Activated naive CD4-positive, alpha-beta T cell treated with anti-CD3 and anti-CD28 coated beads for 36 hours (primary cell): ENCODE measurements at regions of chr19 and their contacts with region 1.

Region 1: DNA sequence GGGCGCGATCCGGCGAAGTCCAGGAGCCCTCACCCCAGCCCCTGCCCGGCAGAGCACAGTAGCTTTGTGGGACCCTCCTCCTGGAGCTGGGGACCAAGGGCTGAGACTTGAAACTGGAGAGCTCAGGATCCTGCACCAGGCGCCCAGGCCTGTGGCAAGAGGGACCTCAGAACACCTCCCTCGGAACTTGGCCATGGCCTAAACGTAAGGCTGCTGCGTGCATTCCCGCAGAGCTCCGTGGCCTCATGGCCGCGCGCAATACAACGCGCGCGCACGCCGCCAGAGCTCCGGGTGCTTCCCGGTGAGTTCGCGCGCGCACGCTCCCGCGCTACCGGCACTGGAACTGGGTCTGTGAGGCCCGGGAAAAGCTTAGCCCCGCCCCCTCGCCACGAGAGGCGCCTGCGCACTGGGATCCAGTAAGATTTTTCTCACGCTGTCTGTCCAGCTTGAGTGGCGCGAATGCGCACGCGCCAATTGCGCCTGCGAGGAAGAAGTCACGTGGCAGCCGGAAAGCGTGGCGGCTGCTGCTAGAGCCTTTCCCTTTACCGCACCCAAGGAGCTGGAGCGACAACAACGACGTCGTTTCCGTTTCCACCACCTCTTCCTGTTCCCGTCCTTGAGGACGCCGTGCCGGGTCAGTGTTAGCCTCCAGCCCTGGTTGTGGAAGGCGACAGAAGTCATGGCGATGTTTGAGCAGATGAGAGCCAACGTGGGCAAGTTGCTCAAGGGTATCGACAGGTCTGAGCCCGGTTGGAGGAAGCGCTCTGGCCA is at the start of gene EIF3K:
- DNase-seq: peak; percentile 99
- H3K4me3 Mint-ChIP-seq: peak within 1 kb of the TSS; percentile 100
- H3K27ac Mint-ChIP-seq: peak within 1 kb of the TSS; percentile 91
- H3K4me1 Mint-ChIP-seq: peaks cover 45% of the 10 kb centered on the region
- H3K27me3 Mint-ChIP-seq: no peaks in the 10 kb centered on the region
- total RNA-seq, gene EIF3K: 299 to 324 TPM

Region 2: GRCh38 chr19:38335949-38336637 is 282.7 kb before region 1 on chr19:
- CTCF ChIA-PET with region 1: no interaction called
- intact Hi-C with region 1: loop called (anchors 2 kb)
- DNase-seq: peak; percentile 98
- H3K4me3 Mint-ChIP-seq: peak overlapping the region; percentile 96
- H3K27ac Mint-ChIP-seq: peak overlapping the region; percentile 96
- H3K4me1 Mint-ChIP-seq: peaks cover 14% of the 10 kb centered on the region
- H3K27me3 Mint-ChIP-seq: no peaks in the 10 kb centered on the region

Region 3: GRCh38 chr19:38425810-38426466 is 192.8 kb before region 1 on chr19 and contains the start of gene RASGRP4:
- CTCF ChIA-PET with region 1: no interaction called
- intact Hi-C with region 1: loop called (anchors 5 kb)
- DNase-seq: peak; percentile 78
- H3K4me3 Mint-ChIP-seq: no peak within 1 kb of the TSS
- H3K27ac Mint-ChIP-seq: peak within 1 kb of the TSS; percentile 61
- H3K4me1 Mint-ChIP-seq: peaks cover 31% of the 10 kb centered on the region
- H3K27me3 Mint-ChIP-seq: peaks cover 2% of the 10 kb centered on the region
- total RNA-seq, gene RASGRP4: 0.30 to 0.41 TPM

Region 4: GRCh38 chr19:38559428-38560401 is 59.1 kb before region 1 on chr19:
- CTCF ChIA-PET with region 1: no interaction called
- intact Hi-C with region 1: loop called (anchors 5 kb)
- DNase-seq: peak; percentile 41
- H3K4me3 Mint-ChIP-seq: no peak overlapping the region
- H3K27ac Mint-ChIP-seq: peak overlapping the region; percentile 53
- H3K4me1 Mint-ChIP-seq: peaks cover 17% of the 10 kb centered on the region
- H3K27me3 Mint-ChIP-seq: peaks cover 13% of the 10 kb centered on the region

Region 5: DNA sequence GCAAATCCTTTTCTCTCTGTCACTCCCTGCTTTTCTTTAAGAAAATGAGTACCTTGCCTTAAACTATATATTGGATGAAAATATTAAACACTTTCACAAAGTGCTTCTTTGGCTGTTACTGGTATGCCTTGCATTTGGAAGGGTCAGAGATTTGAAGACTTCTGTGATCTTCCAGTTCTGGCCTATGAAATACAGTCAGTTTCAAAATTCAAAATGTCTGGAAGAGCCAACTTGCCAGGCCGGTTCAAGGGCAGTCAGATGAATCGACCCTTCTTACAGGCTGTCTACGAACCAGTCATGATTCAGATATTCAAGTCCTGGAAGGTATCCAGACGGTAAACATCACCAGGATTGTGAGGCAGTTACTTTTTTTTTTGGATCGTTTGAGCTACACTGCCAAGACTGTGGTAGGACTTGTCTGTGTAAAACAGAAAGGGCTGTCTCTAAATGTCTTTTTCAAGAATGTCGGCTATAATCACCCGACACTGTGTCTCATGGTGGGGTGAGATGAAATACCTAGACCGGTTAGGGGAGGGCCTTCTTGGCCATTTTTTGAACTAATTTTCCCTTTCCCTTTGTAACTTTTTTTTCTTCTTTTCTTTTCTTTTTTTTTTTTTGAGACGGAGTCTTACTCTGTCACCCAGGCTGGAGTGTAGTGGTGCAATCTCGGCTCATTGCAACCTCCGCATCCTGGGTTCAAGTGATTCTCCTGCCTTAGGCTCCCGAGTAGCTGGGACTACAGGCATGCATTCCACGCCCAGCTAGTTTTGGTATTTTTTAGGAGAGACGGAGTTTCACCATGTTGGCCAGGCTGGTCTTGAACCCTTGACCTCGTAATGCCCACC is 39.9 kb after region 1 on chr19:
- CTCF ChIA-PET with region 1: no interaction called
- intact Hi-C with region 1: loop called (anchors 2 kb)
- DNase-seq: no peak
- H3K4me3 Mint-ChIP-seq: no peak overlapping the region
- H3K27ac Mint-ChIP-seq: no peak overlapping the region
- H3K4me1 Mint-ChIP-seq: peaks cover 59% of the 10 kb centered on the region
- H3K27me3 Mint-ChIP-seq: peaks cover 13% of the 10 kb centered on the region

Region 6: GRCh38 chr19:38929929-38930775 is 311.4 kb after region 1 on chr19 and contains the start of gene SARS2:
- CTCF ChIA-PET with region 1: interaction called, 3 read pairs
- intact Hi-C with region 1: loop called (anchors 1 kb)
- DNase-seq: peak; percentile 94
- H3K4me3 Mint-ChIP-seq: peak within 1 kb of the TSS; percentile 98
- H3K27ac Mint-ChIP-seq: peak within 1 kb of the TSS; percentile 96
- H3K4me1 Mint-ChIP-seq: peaks cover 41% of the 10 kb centered on the region
- H3K27me3 Mint-ChIP-seq: no peaks in the 10 kb centered on the region
- total RNA-seq, gene SARS2: 43.6 to 52.6 TPM